ENCODE measurements at regions of chr2 and their contacts with region 1.

Region 1: DNA sequence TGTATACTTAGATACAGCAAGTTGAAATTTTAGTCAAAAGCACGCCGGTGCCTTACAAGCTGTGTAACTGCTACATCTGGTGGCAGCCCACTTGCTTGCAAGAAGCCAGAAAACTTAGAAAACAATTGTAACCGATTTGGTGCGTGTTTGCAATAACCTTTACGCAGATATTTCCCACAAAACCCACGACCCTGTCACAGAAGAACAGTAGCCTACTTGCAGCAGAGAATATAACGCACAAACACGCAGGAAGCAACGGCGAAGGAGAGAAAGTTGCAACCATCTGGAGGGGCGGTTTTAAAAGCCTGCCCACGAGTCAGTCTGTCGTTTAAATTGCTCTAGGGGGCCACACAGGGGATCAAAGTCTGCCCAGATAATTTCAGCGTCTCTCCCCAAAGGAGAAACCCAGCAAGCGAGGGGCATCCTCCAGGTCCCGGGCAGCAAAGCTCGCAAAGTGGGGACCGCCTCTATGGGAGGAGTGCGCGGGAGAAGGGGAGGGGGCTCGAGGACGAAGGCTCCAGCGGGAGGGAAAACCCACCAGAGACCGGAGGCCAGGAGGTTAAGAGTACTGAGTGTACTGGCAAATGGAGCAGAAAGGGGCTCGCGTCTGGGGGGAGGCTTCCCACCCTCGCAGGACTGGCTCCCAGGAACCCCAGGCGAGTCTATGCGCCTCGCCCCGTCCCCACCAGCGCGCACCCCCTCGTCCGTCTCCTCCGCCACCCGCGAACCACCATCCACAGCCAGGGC is 1.1 kb downstream of the TLK1 start:
- DNase-seq: peak; percentile 28
- H3K4me3 Mint-ChIP-seq: peak overlapping the region; percentile 74
- H3K27ac Mint-ChIP-seq: peak overlapping the region; percentile 90
- H3K4me1 Mint-ChIP-seq: peaks cover 25% of the 10 kb centered on the region
- H3K27me3 Mint-ChIP-seq: no peaks in the 10 kb centered on the region
- CTCF ChIP-seq: peak; percentile 39

Region 2: GRCh38 chr2:170973492-170974303 is 185.8 kb before region 1 on chr2:
- CTCF ChIA-PET with region 1: interaction called, 3 read pairs
- intact Hi-C with region 1: loop called (anchors 2 kb)
- DNase-seq: peak; percentile 91
- H3K4me3 Mint-ChIP-seq: peak overlapping the region; percentile 65
- H3K27ac Mint-ChIP-seq: peak overlapping the region; percentile 70
- H3K4me1 Mint-ChIP-seq: peaks cover 18% of the 10 kb centered on the region
- H3K27me3 Mint-ChIP-seq: no peaks in the 10 kb centered on the region
- CTCF ChIP-seq: peak; percentile 96

Region 3: GRCh38 chr2:171081649-171082111 is 77.9 kb before region 1 on chr2:
- CTCF ChIA-PET with region 1: interaction called, 4 read pairs
- intact Hi-C with region 1: loop called (anchors 2 kb)
- DNase-seq: no peak
- H3K4me3 Mint-ChIP-seq: no peak overlapping the region
- H3K27ac Mint-ChIP-seq: no peak overlapping the region
- H3K4me1 Mint-ChIP-seq: peaks cover 14% of the 10 kb centered on the region
- H3K27me3 Mint-ChIP-seq: no peaks in the 10 kb centered on the region
- CTCF ChIP-seq: no peak

Region 4: GRCh38 chr2:171237751-171238505 is 78.4 kb after region 1 on chr2:
- CTCF ChIA-PET with region 1: no interaction called
- intact Hi-C with region 1: no loop called
- DNase-seq: no peak
- H3K4me3 Mint-ChIP-seq: no peak overlapping the region
- H3K27ac Mint-ChIP-seq: no peak overlapping the region
- H3K4me1 Mint-ChIP-seq: no peaks in the 10 kb centered on the region
- H3K27me3 Mint-ChIP-seq: no peaks in the 10 kb centered on the region
- CTCF ChIP-seq: no peak

Region 5: GRCh38 chr2:171260471-171261424 is 101.2 kb after region 1 on chr2:
- CTCF ChIA-PET with region 1: no interaction called
- intact Hi-C with region 1: no loop called
- DNase-seq: peak; percentile 4
- H3K4me3 Mint-ChIP-seq: peak overlapping the region; percentile 2
- H3K27ac Mint-ChIP-seq: peak overlapping the region; percentile 42
- H3K4me1 Mint-ChIP-seq: peaks cover 27% of the 10 kb centered on the region
- H3K27me3 Mint-ChIP-seq: no peaks in the 10 kb centered on the region
- CTCF ChIP-seq: no peak